Naive thymus-derived CD4-positive, alpha-beta T cell (primary cell): ENCODE measurements at regions of chr1 and their contacts with region 1.

Region 1: GRCh38 chr1:161021165-161021960 is 411 bp upstream of the F11R start:
- DNase-seq: peak; percentile 72 to 97 (median 88)
- ATAC-seq: peak; percentile 98
- H3K4me3 ChIP-seq: peak overlapping the region; percentile 75
- H3K4me3 Mint-ChIP-seq: peak overlapping the region; percentile 87 to 97 (median 91)
- H3K27ac ChIP-seq: peak overlapping the region; percentile 72
- H3K27ac Mint-ChIP-seq: peak overlapping the region; percentile 79 to 96 (median 93)
- H3K4me1 ChIP-seq: peaks cover 11 to 17% of the 10 kb centered on the region in 2 donors
- H3K4me1 Mint-ChIP-seq: peaks cover 24 to 50% (median 48%) of the 10 kb centered on the region in 7 donors
- H3K27me3 ChIP-seq: no peaks in the 10 kb centered on the region
- H3K27me3 Mint-ChIP-seq: no peaks in the 10 kb centered on the region

Region 2: GRCh38 chr1:161038523-161039153 is 17.3 kb after region 1 on chr1 and contains the start of gene TSTD1:
- CTCF ChIA-PET with region 1: interaction called, 6 read pairs
- POLR2A ChIA-PET with region 1: interaction called, 45 read pairs
- intact Hi-C with region 1: loop called (anchors 1 kb)
- DNase-seq: peak; percentile 70 to 90 (median 88)
- ATAC-seq: peak; percentile 95
- H3K4me3 ChIP-seq: peak within 1 kb of the TSS; percentile 95
- H3K4me3 Mint-ChIP-seq: peak within 1 kb of the TSS; percentile 88 to 94 (median 92)
- H3K27ac ChIP-seq: peak within 1 kb of the TSS; percentile 93
- H3K27ac Mint-ChIP-seq: peak within 1 kb of the TSS; percentile 91 to 97 (median 94)
- H3K4me1 ChIP-seq: peaks cover 16 to 32% of the 10 kb centered on the region in 2 donors
- H3K4me1 Mint-ChIP-seq: peaks cover 25 to 57% (median 37%) of the 10 kb centered on the region in 7 donors
- H3K27me3 ChIP-seq: no peaks in the 10 kb centered on the region
- H3K27me3 Mint-ChIP-seq: no peaks in the 10 kb centered on the region
- total RNA-seq, gene TSTD1: 49.8 to 84.0 (median 58.2) TPM